Cardiac septum (tissue), 1 donor: ENCODE measurements at regions of chr22 and their contacts with region 1.

Region 1: DNA sequence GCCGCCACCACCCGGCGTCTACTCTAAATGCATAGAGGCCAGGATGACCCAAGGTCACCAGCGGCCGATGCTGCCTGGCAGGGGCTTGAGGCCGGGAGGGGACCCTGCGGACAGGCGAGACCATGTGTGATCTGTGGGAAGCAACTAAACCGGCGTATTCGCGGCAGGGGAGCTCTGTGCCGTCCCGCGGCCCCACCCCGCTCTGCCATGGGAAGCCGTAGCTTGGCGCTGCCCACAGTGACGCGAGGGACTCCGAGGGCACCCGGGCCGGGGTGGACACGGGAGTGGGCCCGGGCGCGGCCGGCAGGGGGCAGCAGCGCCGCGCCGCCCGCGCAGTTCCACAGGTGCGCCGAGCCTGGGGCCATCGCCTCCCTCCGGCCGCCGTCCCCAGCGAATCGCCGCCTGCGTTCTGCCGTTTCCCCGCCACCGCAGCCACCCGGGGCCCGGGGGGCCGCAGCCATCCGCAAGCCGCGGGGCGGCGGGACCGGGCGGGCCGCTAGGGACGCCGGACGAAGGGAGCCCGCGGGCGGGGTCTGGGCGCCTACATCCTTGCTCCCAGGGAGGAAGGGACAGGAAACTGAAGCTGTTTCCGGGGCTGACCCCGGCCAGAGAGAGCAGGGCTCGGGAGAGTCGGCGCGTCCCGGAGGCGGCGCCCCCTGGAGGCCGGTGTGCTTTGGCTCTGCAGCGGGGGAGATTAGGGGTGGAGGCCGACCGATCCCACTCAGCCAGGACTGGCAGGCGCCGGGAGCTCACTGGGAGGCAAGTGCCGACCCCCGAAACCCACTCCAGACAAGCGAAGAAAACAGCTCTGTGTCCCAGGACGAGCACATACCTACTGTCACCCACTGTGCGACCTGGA is 12.5 kb upstream of the HDHD5 start:
- DNase-seq: peak; percentile 96

Region 2: DNA sequence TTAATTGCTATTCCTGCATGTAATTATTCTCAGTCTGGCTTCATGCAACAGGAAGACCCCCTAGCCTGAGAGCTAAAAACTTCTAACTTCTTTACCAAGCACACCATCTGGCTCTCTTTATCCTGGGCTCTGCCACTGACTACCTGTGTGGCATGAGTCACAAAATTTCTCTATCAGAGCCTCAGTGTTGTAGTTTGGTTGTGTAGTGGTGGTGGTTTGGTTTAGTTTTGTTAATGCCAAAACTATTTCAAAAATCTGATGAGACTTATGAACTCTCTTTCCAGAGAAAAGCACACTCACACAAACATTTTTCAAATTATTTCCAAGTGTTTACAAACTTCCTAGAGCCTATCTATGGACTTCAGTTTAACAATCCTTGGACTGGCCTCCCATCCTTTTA is 94.3 kb before region 1 on chr22:
- intact Hi-C with region 1: loop called (anchors 5 kb)
- DNase-seq: no peak

Region 3: DNA sequence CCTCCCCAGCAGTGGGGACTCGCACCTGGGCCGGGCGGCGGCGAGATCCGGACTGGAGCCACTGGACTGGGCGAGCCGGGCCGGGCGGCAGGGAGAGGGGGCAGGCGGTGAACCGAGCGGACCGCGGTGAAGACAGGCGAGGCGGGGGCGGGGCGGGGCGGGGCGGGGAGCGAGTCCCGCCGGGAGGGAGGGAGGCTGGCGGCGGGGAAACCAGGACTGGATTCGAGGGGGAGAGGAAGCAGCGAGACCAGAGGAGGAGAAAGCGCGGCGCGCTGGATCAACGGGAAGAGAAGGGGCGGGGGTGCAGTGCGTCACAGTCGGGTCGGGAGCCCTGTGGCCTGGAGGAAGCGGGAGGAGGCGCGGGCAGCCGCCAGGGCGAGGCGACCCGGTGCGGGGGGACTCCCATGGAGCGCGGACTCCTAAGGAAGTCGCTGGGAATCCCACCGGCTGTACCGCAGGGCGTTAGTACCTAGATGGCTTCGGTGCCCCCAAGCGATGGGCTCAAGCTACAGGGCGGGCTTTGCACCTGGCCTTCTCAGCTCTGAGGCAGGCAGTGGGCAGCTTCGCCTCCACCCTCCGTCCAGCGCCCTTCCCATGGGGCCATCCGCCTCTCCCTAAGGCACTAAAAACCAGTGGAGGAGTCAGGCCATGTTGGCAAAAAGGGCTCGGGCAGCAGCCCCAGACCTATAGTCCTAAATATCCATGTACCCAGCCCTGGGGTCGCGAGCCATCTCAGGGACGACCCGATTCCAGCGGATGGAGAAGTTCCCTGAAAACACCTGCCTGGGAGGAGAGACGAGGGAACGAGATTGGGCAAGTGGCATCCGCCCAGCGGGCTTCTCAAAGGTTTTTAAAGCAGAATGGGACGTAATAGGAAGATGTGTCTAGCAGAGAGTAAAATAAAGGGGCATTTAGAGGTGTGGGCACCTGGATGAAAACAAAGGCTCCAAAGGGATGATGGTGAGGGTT is 50.0 kb before region 1 on chr22 and contains the start of gene TMEM121B:
- intact Hi-C with region 1: loop called (anchors 2 kb)
- DNase-seq: peak; percentile 90
- total RNA-seq, gene TMEM121B: 1.0 TPM

Region 4: DNA sequence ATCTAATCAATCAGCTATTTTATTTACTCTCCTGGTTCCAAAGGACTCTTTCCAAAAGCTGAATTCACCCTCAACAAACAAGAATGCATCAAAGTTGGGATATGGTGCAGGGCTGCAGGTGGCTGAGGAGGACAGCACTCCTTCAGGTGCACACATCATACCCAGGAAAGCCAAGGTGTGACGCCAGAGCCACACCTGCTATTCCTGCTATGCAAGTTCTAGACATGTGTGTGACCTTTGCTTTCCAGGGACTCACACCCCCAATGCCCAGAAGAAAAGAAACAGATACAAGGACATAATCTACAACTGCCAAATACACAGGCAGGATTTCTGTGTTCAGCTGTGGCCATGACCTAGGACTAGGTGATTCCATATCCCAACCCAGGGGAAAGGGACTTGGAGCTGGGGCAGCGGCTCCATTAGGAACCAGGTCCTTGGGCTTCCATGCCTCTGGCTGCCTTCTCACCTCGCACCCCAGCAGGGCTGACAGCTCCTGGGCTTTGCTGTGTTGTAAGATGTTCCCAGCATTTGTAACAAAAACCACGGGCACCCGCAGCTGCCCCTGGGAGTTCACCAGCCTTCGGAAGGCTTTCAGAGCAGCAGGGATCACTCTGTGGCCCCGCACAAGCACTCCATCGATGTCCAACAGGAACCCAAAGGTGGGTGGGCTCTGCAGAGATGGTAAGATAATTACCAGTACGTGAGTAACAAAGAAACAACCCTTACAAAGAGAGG is 22.3 kb before region 1 on chr22:
- intact Hi-C with region 1: no loop called
- DNase-seq: no peak

Region 5: GRCh38 chr22:17199003-17199731 is 27.6 kb after region 1 on chr22:
- intact Hi-C with region 1: loop called (anchors 1 kb)
- DNase-seq: no peak

Region 6: GRCh38 chr22:17228725-17229126 is 57.2 kb after region 1 on chr22:
- intact Hi-C with region 1: no loop called
- DNase-seq: no peak

Region 7: GRCh38 chr22:17303840-17304779 is 132.6 kb after region 1 on chr22:
- intact Hi-C with region 1: no loop called
- DNase-seq: no peak

Region 8: GRCh38 chr22:17368554-17369438 is 197.3 kb after region 1 on chr22:
- intact Hi-C with region 1: loop called (anchors 10 kb)
- DNase-seq: no peak

Region 9: DNA sequence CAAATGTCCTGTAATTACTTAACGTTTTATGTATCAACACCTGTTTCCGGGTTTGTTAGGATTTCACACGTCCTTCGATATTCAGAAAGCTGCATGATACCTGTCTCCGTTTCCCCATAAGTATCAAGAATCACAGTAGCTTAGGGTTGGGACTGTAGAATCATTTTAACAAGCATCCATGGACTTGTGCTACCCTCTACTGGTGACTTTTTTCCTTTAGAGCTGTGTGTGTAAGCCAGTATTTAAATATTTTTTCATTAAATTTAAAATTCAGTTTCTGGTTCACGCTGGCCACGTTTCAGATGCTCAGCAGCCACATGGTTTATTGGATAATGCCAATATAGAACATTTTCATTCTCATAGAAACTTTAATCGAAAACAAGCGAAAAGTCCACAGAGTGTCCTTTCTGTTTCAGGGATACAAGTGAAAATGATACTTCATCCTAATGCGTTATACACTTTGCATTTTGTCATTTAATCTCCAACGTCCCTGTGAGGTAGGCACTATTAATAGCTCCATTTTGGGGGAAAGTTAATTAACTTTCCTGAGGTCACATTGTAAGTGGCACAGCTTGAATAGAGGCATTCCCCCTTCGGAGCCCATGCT is 330.2 kb after region 1 on chr22:
- intact Hi-C with region 1: loop called (anchors 1 kb)
- DNase-seq: no peak